Heart right ventricle (tissue), 16 donors: ENCODE measurements at regions of chr10 and their contacts with region 1.

Region 1: GRCh38 chr10:70363971-70364771 is 18.3 kb downstream of the LRRC20 start:
- DNase-seq: peak; percentile 88
- ATAC-seq: peak; percentile 95 to 99 (median 97)
- H3K4me3 ChIP-seq: peak overlapping the region in 2 of 10 donors; percentile 16 to 22
- H3K27ac ChIP-seq: peak overlapping the region; percentile 13 to 81 (median 74)
- H3K4me1 ChIP-seq: peaks cover 9 to 19% (median 16%) of the 10 kb centered on the region in 9 donors
- H3K27me3 ChIP-seq: no peaks in the 10 kb centered on the region
- CTCF ChIP-seq: peak; percentile 91 to 97 (median 96)

Region 2: GRCh38 chr10:70093335-70093944 is 270.7 kb before region 1 on chr10:
- intact Hi-C with region 1: no loop called
- DNase-seq: no peak
- ATAC-seq: no peak
- H3K4me3 ChIP-seq: peak overlapping the region in 1 of 10 donors; percentile 3
- H3K27ac ChIP-seq: no peak overlapping the region
- H3K4me1 ChIP-seq: no peaks in the 10 kb centered on the region
- H3K27me3 ChIP-seq: no peaks in the 10 kb centered on the region
- CTCF ChIP-seq: no peak

Region 3: DNA sequence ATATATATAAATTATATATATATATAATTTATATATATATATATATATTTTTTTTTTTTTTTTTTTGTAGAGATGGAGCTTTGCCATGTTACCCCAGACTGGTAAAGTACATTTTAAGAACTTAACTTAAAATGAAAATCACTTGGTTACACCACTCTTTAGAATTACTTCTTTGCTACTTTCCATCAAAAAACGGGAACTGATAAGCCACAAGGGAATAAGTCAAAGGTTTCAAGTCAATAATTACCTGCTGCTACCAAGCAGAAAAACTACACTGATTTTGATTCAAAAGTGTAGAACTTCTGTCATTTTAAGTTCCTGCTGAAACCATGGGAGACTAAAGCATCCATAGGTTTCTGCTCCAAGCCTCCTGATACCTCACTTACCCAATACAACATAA is 143.1 kb before region 1 on chr10:
- intact Hi-C with region 1: loop called (anchors 1 to 5 kb)
- DNase-seq: no peak
- ATAC-seq: no peak
- H3K4me3 ChIP-seq: peak overlapping the region in 1 of 10 donors; percentile 0
- H3K27ac ChIP-seq: peak overlapping the region in 3 of 10 donors; percentile 29 to 46 (median 30)
- H3K4me1 ChIP-seq: peaks cover 0 to 18% (median 9%) of the 10 kb centered on the region in 9 donors
- H3K27me3 ChIP-seq: no peaks in the 10 kb centered on the region
- CTCF ChIP-seq: no peak

Region 4: DNA sequence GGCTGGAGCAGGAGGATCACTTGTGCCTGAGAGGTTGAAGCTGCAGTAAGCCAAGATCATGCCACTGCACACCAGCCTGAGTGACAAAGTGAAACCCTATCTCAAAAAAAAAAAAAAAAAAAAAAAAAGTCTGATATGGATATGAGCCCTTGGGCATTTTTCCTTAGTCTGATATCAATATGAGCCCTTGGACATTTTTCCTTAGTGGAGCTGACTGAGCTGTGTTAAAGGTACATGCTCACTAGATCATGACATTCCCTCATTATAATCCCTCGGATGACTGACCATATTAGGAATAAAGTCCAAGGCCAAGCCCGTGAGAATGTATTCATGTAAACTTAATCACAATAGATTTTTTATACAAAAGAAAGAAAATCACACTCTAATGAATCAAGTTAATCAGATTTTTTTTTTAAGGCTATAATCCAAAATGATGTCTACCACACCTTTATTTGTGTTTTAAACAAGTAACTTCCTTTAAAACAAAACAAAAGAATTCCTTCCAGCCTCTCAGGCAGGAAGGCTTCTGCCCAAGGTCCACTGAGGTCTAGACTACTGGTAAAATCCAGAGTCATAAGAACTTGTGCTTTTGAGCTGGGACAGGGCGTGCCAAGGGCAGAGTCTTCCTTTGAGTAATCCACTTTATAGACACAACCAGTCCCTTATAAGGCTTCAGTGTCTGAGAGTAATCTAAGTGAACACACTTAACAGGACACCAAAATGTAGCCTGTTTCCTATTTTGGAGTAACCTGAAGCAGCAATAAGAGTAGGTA is 136.4 kb before region 1 on chr10:
- intact Hi-C with region 1: loop called in 5 of 10 experiments (anchors 2 to 5 kb)
- DNase-seq: no peak
- ATAC-seq: peak in 4 of 8 donors; percentile 29 to 56 (median 42)
- H3K4me3 ChIP-seq: no peak overlapping the region
- H3K27ac ChIP-seq: peak overlapping the region in 4 of 10 donors; percentile 10 to 37 (median 20)
- H3K4me1 ChIP-seq: peaks cover 0 to 53% (median 32%) of the 10 kb centered on the region in 9 donors
- H3K27me3 ChIP-seq: no peaks in the 10 kb centered on the region
- CTCF ChIP-seq: no peak

Region 5: DNA sequence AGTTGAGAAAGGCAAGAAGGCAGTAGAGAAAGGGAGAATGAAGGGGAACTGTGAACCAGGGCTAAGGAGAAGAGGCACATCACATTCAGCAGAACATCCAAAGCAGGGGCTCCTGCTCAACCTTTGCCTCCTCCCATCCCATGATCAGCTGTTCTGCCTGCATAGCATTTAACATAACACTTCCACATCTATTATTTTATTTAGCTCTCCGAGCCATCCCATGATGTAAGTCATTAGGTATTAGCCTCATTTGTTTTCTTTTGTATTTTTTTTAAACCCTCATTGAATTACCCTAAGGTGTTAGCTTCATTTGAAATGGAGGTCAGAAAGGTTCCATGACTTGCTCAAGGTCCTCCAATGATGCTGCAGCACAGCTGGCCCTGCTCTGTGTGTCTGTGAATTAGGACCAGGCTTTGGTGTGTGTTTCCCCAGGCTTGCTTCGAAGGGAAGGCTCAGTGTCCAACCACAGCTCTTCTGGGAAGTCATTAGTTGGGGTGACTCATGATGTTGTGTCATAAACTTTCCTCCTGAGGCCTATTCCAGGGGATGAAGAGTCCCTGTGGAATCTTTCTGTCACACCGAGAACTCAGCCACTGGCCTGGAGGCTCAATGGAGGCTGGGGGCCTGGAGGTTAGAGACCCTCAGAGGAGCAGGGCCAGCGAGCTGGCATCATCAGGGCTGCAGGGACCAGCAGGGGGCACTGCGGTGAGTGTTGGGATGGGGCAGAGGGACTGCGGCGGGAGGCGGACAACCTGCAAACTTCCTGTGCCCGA is 96.8 kb before region 1 on chr10:
- intact Hi-C with region 1: loop called in 9 of 10 experiments (anchors 2 to 5 kb)
- DNase-seq: no peak
- ATAC-seq: peak in 2 of 8 donors; percentile 15 to 75
- H3K4me3 ChIP-seq: no peak overlapping the region
- H3K27ac ChIP-seq: no peak overlapping the region
- H3K4me1 ChIP-seq: peaks cover 0 to 17% (median 0%) of the 10 kb centered on the region in 9 donors
- H3K27me3 ChIP-seq: peaks cover 0 to 14% (median 0%) of the 10 kb centered on the region in 7 donors
- CTCF ChIP-seq: peak in 5 of 9 donors; percentile 18 to 35 (median 22)